A673 (cell line): ENCODE measurements at regions of chr12 and their contacts with region 1.

Region 1: GRCh38 chr12:117587631-117588287 is 226.3 kb upstream of the NOS1 start:
- DNase-seq: peak; percentile 63
- H3K4me3 ChIP-seq: no peak overlapping the region
- H3K27ac ChIP-seq: no peak overlapping the region
- H3K4me1 ChIP-seq: no peaks in the 10 kb centered on the region
- H3K27me3 ChIP-seq: peaks cover 22% of the 10 kb centered on the region
- CTCF ChIP-seq: peak; percentile 87

Region 2: GRCh38 chr12:117836999-117837736 is 249.4 kb after region 1 on chr12:
- CTCF ChIA-PET with region 1: interaction called, 3 read pairs
- POLR2A ChIA-PET with region 1: no interaction called
- intact Hi-C with region 1: loop called (anchors 10 kb)
- DNase-seq: peak; percentile 82
- H3K4me3 ChIP-seq: no peak overlapping the region
- H3K27ac ChIP-seq: no peak overlapping the region
- H3K4me1 ChIP-seq: no peaks in the 10 kb centered on the region
- H3K27me3 ChIP-seq: peaks cover 34% of the 10 kb centered on the region
- CTCF ChIP-seq: peak; percentile 99

Region 3: GRCh38 chr12:117936722-117937484 is 349.1 kb after region 1 on chr12:
- CTCF ChIA-PET with region 1: no interaction called
- POLR2A ChIA-PET with region 1: no interaction called
- intact Hi-C with region 1: no loop called
- DNase-seq: no peak
- H3K4me3 ChIP-seq: no peak overlapping the region
- H3K27ac ChIP-seq: no peak overlapping the region
- H3K4me1 ChIP-seq: no peaks in the 10 kb centered on the region
- H3K27me3 ChIP-seq: peaks cover 9% of the 10 kb centered on the region
- CTCF ChIP-seq: no peak